ENCODE measurements at regions of chrX and their contacts with region 1.

Region 1: DNA sequence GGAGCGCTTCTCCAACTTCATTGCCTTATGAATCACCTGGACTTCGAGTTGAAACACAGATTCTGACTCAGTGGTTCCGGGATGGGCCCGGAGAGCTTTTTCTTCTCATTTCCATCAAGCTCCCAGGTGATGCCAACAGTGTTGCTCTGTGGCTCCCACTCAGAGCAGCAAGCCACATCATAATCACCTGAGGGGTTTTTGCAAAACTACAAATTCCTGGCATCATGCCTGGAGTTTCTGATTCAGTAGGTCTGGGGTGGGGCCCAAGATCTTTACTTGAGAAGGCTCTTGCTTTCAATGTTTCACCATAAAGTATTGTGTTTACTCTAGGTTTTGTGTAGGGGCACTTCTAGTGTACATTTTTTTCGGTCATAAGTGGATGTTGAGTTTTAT is 7.0 kb downstream of the MTM1 start:
- DNase-seq: no peak
- H3K4me3 Mint-ChIP-seq: peak overlapping the region; percentile 72
- H3K27ac Mint-ChIP-seq: peak overlapping the region; percentile 94
- H3K4me1 Mint-ChIP-seq: peaks cover 71% of the 10 kb centered on the region
- H3K27me3 Mint-ChIP-seq: no peaks in the 10 kb centered on the region

Region 2: DNA sequence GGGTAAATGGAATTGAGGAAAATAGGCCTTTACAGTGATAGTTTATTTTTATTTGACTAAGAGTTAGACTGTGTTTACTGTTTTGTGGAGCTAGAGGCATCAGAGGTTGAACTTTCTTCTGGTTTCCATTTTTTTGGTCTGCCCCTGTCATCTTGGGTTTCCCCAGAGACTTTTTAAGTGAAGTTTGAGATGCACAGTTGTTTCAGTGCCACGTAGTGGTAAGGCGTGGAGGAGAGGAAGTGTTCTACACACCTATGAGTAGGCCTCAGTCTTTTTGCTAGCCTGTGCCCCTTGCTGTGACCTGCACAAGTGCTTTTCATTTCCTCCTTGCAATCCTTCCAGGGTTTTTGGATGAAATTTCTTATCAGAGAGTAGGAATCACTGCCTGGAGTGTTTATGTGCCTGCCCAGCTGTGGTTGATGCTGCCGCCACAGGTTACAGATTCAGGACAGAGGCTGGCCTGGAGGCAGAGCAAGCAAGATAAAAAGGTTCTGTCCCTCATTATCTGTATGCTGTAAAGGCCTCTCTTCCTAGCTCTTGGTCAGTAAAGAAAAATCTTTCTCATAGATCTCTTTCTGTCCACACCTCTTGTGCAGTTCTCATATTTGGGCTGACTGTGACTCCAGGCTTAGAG is 658.5 kb before region 1 on chrX:
- intact Hi-C with region 1: loop called (anchors 10 kb)
- DNase-seq: no peak
- H3K4me3 Mint-ChIP-seq: no peak overlapping the region
- H3K27ac Mint-ChIP-seq: peak overlapping the region; percentile 70
- H3K4me1 Mint-ChIP-seq: peaks cover 11% of the 10 kb centered on the region
- H3K27me3 Mint-ChIP-seq: no peaks in the 10 kb centered on the region

Region 3: GRCh38 chrX:150200820-150201287 is 374.6 kb before region 1 on chrX:
- intact Hi-C with region 1: loop called (anchors 1 kb)
- DNase-seq: peak; percentile 28
- H3K4me3 Mint-ChIP-seq: no peak overlapping the region
- H3K27ac Mint-ChIP-seq: no peak overlapping the region
- H3K4me1 Mint-ChIP-seq: peaks cover 8% of the 10 kb centered on the region
- H3K27me3 Mint-ChIP-seq: no peaks in the 10 kb centered on the region

Region 4: GRCh38 chrX:150438165-150438564 is 137.2 kb before region 1 on chrX:
- intact Hi-C with region 1: loop called (anchors 5 kb)
- DNase-seq: no peak
- H3K4me3 Mint-ChIP-seq: no peak overlapping the region
- H3K27ac Mint-ChIP-seq: no peak overlapping the region
- H3K4me1 Mint-ChIP-seq: peaks cover 11% of the 10 kb centered on the region
- H3K27me3 Mint-ChIP-seq: no peaks in the 10 kb centered on the region

Region 5: DNA sequence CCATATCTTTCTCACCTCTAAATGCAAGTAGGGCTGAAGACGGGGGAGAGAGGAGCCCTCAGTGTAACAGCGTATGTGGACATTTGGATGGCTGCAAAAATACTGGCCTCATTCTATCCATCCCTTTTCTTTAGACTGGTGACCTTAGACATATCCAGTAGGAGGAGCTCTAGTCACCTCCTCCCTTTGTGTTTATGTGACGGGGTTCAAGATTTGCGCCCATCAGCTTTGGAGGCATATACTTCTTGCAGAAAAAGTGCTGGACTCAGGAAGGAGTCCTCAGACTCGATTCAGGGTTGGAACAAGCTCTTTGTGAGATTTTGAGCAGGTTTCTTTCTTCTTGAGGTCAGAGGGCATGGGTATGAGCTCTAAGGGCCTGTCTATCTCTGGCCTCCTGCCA is 126.1 kb before region 1 on chrX:
- intact Hi-C with region 1: no loop called
- DNase-seq: no peak
- H3K4me3 Mint-ChIP-seq: no peak overlapping the region
- H3K27ac Mint-ChIP-seq: no peak overlapping the region
- H3K4me1 Mint-ChIP-seq: peaks cover 31% of the 10 kb centered on the region
- H3K27me3 Mint-ChIP-seq: no peaks in the 10 kb centered on the region

Region 6: DNA sequence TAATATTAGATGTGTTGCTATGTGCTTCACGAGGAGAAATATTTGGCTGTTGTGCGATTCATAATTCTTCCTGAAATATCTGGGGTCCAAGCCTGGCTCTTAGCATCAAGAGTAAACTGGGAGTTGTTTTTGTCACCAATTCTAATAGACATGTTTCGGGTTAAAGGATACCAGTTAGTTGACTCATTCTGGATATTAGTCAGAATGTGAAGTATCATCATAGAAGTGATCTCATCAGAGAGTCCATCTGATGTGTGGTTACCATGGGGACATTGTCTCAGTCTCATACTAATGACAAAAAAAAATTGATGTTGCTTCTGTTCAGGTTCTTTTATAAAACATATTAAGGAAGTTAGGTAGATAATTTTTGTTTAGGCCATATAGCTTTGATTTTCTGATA is 60.5 kb after region 1 on chrX:
- intact Hi-C with region 1: loop called (anchors 1 kb)
- DNase-seq: no peak
- H3K4me3 Mint-ChIP-seq: no peak overlapping the region
- H3K27ac Mint-ChIP-seq: peak overlapping the region; percentile 74
- H3K4me1 Mint-ChIP-seq: peaks cover 8% of the 10 kb centered on the region
- H3K27me3 Mint-ChIP-seq: no peaks in the 10 kb centered on the region

Region 7: GRCh38 chrX:150821971-150822370 is 246.6 kb after region 1 on chrX:
- intact Hi-C with region 1: no loop called
- DNase-seq: no peak
- H3K4me3 Mint-ChIP-seq: no peak overlapping the region
- H3K27ac Mint-ChIP-seq: no peak overlapping the region
- H3K4me1 Mint-ChIP-seq: no peaks in the 10 kb centered on the region
- H3K27me3 Mint-ChIP-seq: no peaks in the 10 kb centered on the region

Region 8: GRCh38 chrX:151396825-151397740 is 821.7 kb after region 1 on chrX and contains the start of gene VMA21:
- intact Hi-C with region 1: loop called (anchors 5 kb)
- DNase-seq: peak; percentile 76
- H3K4me3 Mint-ChIP-seq: peak within 1 kb of the TSS; percentile 87
- H3K27ac Mint-ChIP-seq: peak within 1 kb of the TSS; percentile 89
- H3K4me1 Mint-ChIP-seq: peaks cover 36% of the 10 kb centered on the region
- H3K27me3 Mint-ChIP-seq: no peaks in the 10 kb centered on the region
- total RNA-seq, gene VMA21: 40.8 and 43.1 TPM in 2 replicates